ENCODE measurements at regions of chr19 and their contacts with region 1.

Region 1: GRCh38 chr19:35135389-35135909 is 590 bp upstream of the LGI4 start:
- DNase-seq: peak; percentile 62
- ATAC-seq: peak; percentile 89
- H3K4me3 ChIP-seq: no peak overlapping the region
- H3K27ac ChIP-seq: no peak overlapping the region
- H3K4me1 ChIP-seq: no peaks in the 10 kb centered on the region
- H3K27me3 ChIP-seq: no peaks in the 10 kb centered on the region
- CTCF ChIP-seq: peak; percentile 77

Region 2: GRCh38 chr19:35114353-35115176 is 20.9 kb before region 1 on chr19:
- CTCF ChIA-PET with region 1: no interaction called
- POLR2A ChIA-PET with region 1: no interaction called
- intact Hi-C with region 1: loop called (anchors 1 kb)
- DNase-seq: peak; percentile 62
- ATAC-seq: peak; percentile 72
- H3K4me3 ChIP-seq: peak overlapping the region; percentile 79
- H3K27ac ChIP-seq: peak overlapping the region; percentile 92
- H3K4me1 ChIP-seq: peaks cover 41% of the 10 kb centered on the region
- H3K27me3 ChIP-seq: no peaks in the 10 kb centered on the region
- CTCF ChIP-seq: peak; percentile 91